SK-N-SH (cell line): ENCODE measurements at regions of chr17 and their contacts with region 1.

Region 1: GRCh38 chr17:41907185-41907556 is 11.6 kb downstream of the ACLY start:
- DNase-seq: no peak
- H3K4me3 ChIP-seq: no peak overlapping the region
- H3K27ac ChIP-seq: peak overlapping the region; percentile 85 to 97
- H3K4me1 ChIP-seq: peaks cover 38 to 57% of the 10 kb centered on the region in 2 experiments
- H3K27me3 ChIP-seq: no peaks in the 10 kb centered on the region
- CTCF ChIP-seq: no peak
- EP300 ChIP-seq: peak in 1 of 2 experiments; percentile 88; a peak in 2 of 4 replicates
- RAD21 ChIP-seq: no peak

Region 2: DNA sequence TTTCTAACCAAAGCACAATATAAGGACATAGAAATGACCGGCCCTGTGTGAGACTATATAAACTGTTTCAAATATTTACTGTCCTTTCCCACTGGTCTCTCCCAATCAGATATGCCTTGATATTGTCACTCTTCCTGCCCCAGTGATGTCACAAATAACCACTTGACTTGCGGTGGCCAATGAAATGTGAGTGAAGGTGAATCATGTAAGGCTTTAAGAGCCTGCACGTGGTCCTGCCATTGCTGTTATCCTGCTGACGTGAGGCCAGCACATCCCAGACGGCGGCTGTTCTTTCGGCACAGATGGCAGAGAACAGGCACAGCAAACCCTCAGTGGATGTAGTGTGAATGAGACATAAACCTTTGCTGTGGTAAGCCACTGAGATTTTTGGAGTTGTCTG is 36.5 kb before region 1 on chr17:
- CTCF ChIA-PET with region 1: no interaction called
- POLR2A ChIA-PET with region 1: no interaction called
- DNase-seq: no peak
- H3K4me3 ChIP-seq: no peak overlapping the region
- H3K27ac ChIP-seq: no peak overlapping the region
- H3K4me1 ChIP-seq: no peaks in the 10 kb centered on the region
- H3K27me3 ChIP-seq: no peaks in the 10 kb centered on the region
- CTCF ChIP-seq: no peak
- EP300 ChIP-seq: no peak
- RAD21 ChIP-seq: no peak

Region 3: DNA sequence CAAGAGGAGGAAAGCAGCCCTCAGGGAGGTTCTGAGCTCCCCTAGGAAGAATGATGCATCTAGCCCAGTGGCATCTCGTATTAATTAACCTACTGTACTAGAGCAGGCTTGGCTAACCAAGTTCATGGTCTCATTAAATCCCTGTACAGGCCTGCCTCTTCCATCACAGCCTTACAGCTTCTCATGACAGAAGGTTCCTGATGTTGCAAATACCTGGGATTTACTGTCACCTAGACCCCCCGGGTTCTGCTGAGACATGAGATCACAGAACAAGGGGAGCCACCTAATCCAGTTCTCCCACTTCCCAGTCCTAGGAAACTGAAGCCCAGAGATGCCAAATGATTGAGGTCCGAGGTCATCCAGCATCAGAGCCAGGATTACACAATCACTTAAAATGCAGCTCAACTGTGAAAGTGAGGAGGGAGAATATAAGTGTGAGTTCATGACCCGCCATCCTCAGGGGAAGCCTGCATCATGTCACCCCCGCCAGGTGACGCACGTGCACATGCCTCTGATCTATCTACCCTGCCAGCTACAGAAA is 12.3 kb before region 1 on chr17:
- CTCF ChIA-PET with region 1: interaction called, 6 read pairs
- POLR2A ChIA-PET with region 1: interaction called, 16 read pairs
- DNase-seq: peak; percentile 73
- H3K4me3 ChIP-seq: no peak overlapping the region
- H3K27ac ChIP-seq: peak overlapping the region; percentile 73 to 76
- H3K4me1 ChIP-seq: peaks cover 15 to 28% of the 10 kb centered on the region in 2 experiments; a peak in 3 of 4 replicates
- H3K27me3 ChIP-seq: no peaks in the 10 kb centered on the region
- CTCF ChIP-seq: no peak
- EP300 ChIP-seq: no peak
- RAD21 ChIP-seq: no peak

Region 4: GRCh38 chr17:41918314-41919164 is 11.4 kb after region 1 on chr17 and contains the start of gene ACLY:
- CTCF ChIA-PET with region 1: interaction called, 21 read pairs
- POLR2A ChIA-PET with region 1: interaction called, 17 read pairs
- DNase-seq: peak; percentile 99
- H3K4me3 ChIP-seq: peak within 1 kb of the TSS; percentile 80 to 82
- H3K27ac ChIP-seq: peak within 1 kb of the TSS; percentile 84 to 90
- H3K4me1 ChIP-seq: peaks cover 22 to 36% of the 10 kb centered on the region in 2 experiments; a peak in 2 of 4 replicates
- H3K27me3 ChIP-seq: no peaks in the 10 kb centered on the region
- CTCF ChIP-seq: no peak
- EP300 ChIP-seq: no peak
- RAD21 ChIP-seq: no peak
- polyA plus RNA-seq, gene ACLY: 161 and 163 TPM in 2 replicates

Region 5: DNA sequence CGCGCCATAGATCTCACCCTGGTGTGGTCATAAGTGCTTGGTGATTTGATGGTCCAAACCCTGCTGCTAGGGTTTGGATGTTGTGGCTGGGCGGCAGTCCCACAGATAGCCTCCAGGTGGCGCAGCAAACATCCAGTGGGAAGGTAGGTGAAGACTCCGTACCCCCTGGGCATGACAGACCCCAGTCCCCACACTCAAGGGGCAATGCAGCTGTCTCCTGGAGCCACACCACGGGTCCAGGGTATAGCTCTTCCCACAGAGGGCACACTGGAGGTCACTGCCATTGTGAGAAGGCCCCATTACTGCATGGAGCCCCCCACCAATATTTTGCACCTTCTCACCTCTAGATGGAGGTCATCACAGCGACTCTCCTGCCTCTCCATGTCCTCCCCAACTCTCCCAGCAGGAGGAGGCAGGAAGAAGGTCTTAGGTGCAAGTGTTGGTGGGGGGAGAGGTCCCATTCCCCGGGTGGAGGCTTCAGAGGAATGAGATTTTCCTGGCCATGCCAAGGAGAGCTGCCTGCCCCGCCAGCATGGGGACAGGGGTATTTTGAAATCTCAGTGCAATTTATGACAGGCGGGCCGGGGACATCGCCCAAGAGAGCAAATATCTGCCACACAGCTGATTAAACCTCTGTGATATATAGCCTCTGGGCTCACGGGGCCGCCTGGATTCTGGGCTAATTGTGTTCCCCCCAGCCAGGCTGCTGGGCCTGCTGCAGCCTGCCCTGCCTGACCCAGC is 160.3 kb after region 1 on chr17:
- CTCF ChIA-PET with region 1: no interaction called
- POLR2A ChIA-PET with region 1: no interaction called
- DNase-seq: peak; percentile 85
- H3K4me3 ChIP-seq: peak overlapping the region in 1 of 2 experiments; percentile 4; a peak in 1 of 4 replicates
- H3K27ac ChIP-seq: no peak overlapping the region
- H3K4me1 ChIP-seq: peaks cover 0 to 12% of the 10 kb centered on the region in 2 experiments; a peak in 1 of 4 replicates
- H3K27me3 ChIP-seq: no peaks in the 10 kb centered on the region
- CTCF ChIP-seq: peak; percentile 88
- EP300 ChIP-seq: no peak
- RAD21 ChIP-seq: peak; percentile 63